ENCODE measurements at regions of chr3 and their contacts with region 1.

Region 1: DNA sequence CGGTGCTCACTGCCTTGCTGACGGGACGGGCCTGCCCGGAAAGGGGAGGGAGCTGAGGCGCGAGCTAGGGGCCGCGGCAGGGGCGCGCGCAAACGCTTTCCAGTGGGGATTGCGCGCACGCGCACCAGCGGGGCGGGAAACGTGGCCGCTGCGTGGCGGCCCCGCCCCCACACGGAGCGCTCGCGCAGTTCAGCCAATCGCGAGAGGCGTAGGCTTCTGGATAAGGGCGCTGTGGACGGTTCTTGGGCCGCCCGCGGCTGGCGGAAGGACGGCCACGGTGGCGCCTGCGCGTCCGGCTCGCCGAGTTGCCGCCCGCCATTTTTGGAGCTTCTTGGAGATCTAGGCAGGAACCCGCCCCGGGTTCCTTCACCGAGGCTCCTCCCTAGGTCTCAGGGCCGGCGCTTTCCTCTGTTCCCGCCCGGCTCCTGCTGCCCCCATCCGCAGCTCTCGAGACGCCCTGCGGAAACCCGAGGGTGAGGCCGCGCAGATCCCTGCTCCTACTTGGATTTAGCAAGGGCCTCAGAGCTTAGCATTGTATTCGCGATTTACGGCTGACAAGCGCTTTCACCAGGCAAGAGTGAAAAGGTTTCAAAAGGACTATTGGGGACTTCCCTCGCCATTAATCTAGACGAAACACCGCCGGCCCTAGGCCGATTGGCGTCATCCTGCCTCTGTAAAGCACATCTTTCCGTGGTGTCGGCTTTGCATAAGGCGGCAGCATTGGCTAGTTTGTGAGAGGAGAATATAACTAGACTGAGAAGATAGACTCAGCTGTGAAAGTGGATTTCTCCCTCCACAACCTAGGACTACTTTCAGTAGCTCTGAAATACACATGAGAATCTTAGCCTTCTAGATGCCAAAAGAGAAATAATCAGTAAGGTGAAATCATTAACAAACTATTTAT is 496 bp upstream of the STAG1 start:
- DNase-seq: peak; percentile 99
- H3K4me3 Mint-ChIP-seq: peak overlapping the region; percentile 76
- H3K27ac Mint-ChIP-seq: peak overlapping the region; percentile 94
- H3K4me1 Mint-ChIP-seq: peaks cover 41% of the 10 kb centered on the region
- H3K27me3 Mint-ChIP-seq: peaks cover 4% of the 10 kb centered on the region

Region 2: GRCh38 chr3:136075218-136075808 is 677.4 kb before region 1 on chr3:
- CTCF ChIA-PET with region 1: interaction called, 40 read pairs
- DNase-seq: peak; percentile 83
- H3K4me3 Mint-ChIP-seq: no peak overlapping the region
- H3K27ac Mint-ChIP-seq: no peak overlapping the region
- H3K4me1 Mint-ChIP-seq: peaks cover 2% of the 10 kb centered on the region
- H3K27me3 Mint-ChIP-seq: no peaks in the 10 kb centered on the region

Region 3: GRCh38 chr3:136250226-136250902 is 502.3 kb before region 1 on chr3 and contains the start of gene PCCB:
- CTCF ChIA-PET with region 1: interaction called, 13 read pairs
- DNase-seq: peak; percentile 94
- H3K4me3 Mint-ChIP-seq: peak within 1 kb of the TSS; percentile 78
- H3K27ac Mint-ChIP-seq: peak within 1 kb of the TSS; percentile 90
- H3K4me1 Mint-ChIP-seq: peaks cover 23% of the 10 kb centered on the region
- H3K27me3 Mint-ChIP-seq: peaks cover 4% of the 10 kb centered on the region

Region 4: DNA sequence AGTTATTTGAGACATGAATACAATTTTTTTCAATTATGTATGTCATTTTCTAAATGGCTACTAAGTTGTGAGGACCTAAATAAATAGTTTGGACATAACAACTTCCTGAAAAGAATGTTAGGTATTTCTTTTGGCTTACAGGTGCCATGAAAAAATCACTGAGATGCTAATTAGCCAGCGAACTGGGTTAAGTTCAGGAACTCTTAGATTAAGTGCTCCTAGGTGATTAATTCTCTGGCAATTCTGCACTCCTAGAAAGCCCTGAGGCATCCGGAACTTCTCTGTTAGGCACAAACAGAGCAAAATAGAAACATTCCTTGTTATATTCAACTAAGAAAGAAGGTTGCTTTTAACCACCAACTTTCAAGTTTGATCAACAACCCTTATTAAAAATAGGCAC is 192.8 kb before region 1 on chr3:
- CTCF ChIA-PET with region 1: no interaction called
- DNase-seq: no peak
- H3K4me3 Mint-ChIP-seq: no peak overlapping the region
- H3K27ac Mint-ChIP-seq: no peak overlapping the region
- H3K4me1 Mint-ChIP-seq: no peaks in the 10 kb centered on the region
- H3K27me3 Mint-ChIP-seq: no peaks in the 10 kb centered on the region

Region 5: DNA sequence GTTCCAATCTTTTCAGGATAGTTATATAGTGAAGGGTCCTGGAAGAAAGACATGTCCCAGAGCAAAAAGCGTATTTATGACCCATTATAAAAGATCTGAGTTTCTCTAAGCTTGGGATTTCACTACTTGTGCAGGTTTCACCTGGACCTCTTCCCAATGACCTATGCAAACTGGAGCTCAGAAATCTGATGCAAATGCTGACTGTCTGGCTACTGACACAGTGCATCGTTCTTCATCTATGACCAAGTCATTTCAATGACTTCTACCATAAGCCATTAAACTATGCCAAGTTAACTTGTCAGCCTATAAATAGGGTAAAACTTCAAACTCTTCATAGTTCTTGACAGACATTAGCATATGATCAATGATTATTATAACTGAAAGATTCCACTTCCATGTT is 11.6 kb before region 1 on chr3:
- CTCF ChIA-PET with region 1: interaction called, 10 read pairs
- DNase-seq: no peak
- H3K4me3 Mint-ChIP-seq: no peak overlapping the region
- H3K27ac Mint-ChIP-seq: no peak overlapping the region
- H3K4me1 Mint-ChIP-seq: peaks cover 16% of the 10 kb centered on the region
- H3K27me3 Mint-ChIP-seq: no peaks in the 10 kb centered on the region

Region 6: DNA sequence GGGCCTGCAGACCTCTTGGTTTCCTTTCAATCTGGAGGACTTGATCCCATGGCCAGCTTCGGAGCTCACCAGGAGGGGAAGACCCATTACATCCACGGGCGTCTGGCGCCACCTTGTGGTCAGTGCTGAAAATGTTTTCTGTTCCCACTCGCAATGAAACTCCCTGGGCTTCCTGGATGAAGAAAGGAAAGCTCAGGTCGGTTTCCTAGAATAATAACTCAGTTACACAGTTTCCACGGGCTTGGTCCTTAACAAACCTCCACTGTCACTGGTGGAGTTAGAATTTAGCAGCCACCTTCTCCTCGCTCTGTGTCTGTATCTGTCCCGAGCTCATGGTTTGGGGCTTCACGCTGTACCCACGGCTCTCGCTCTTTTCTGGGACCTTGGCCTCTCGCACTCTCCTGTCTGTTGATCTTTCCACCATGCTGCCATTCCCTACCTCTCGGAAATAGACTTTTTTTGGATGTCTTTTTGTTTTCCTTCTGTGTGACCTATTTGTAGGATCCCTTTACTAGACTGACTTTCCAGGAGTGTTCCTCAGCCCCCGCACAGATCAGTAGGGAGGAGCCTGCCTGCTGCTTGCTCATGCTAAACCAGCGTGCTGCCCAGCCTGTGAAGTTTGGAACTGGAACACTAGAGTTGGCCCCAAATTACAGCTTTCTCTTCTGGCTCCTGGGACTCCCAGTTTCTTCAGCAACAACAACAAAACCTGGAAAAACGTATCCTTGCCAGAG is 261.4 kb after region 1 on chr3:
- CTCF ChIA-PET with region 1: interaction called, 156 read pairs
- DNase-seq: peak; percentile 88
- H3K4me3 Mint-ChIP-seq: peak overlapping the region; percentile 56
- H3K27ac Mint-ChIP-seq: no peak overlapping the region
- H3K4me1 Mint-ChIP-seq: peaks cover 13% of the 10 kb centered on the region
- H3K27me3 Mint-ChIP-seq: peaks cover 4% of the 10 kb centered on the region

Measured in activated naive CD4-positive, alpha-beta T cell treated with anti-CD3 and anti-CD28 coated beads, Interleukin-2, amount 10 ng/mL, durations not matched to agents 7 days and 5 days (primary cell).